Activated CD4-positive, alpha-beta T cell treated with anti-CD3 and anti-CD28 coated beads, Interleukin-2, amount 10 ng/mL, durations not matched to agents 24 days and 14 days (primary cell): ENCODE measurements at regions of chr11 and their contacts with region 1.

Region 1: DNA sequence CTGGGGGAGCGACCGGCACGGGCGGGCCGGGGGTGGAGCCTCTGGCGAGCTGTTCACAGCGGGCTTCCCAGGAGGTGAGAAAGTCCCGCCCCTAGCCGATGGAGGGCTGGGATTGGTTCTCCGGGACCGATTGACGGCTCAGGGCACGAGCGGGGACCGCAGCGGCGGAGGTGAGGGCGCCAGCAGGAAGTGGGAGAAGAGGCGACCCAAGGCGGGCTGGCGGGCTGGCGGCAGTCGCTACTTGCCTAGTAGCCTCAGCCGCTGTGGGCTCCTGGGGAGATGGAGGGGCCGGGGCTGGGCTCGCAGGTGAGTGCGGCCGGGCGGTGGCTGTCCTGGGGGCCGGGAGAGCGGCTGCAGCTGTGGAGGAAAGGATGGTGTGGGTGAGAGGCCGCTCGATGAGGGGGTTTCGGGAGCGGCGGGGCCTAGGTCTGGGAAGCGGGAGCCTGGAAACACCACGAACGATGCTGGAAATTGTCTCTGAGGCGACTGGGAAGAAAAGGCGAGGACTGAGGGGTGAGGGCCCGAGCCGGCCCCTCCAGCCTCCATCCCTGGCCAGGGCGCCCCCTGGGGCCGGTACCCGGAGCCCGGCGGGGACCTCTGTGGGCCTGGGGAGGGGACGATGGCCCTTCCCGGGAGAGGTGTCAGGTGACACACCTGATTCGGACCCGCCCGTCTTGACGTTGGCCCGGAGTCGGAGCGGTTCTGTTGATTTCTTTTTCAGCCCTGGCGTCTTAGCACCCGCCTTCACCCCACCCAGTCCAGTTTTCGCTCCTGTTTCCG is at the start of gene ZDHHC13:
- DNase-seq: peak; percentile 99
- H3K4me3 Mint-ChIP-seq: peak within 1 kb of the TSS; percentile 94
- H3K27ac Mint-ChIP-seq: peak within 1 kb of the TSS; percentile 93
- H3K4me1 Mint-ChIP-seq: peaks cover 43% of the 10 kb centered on the region
- H3K27me3 Mint-ChIP-seq: peaks cover 19% of the 10 kb centered on the region
- total RNA-seq, gene ZDHHC13: 24.8 and 28.1 TPM in 2 replicates

Region 2: GRCh38 chr11:19482319-19483100 is 365.3 kb after region 1 on chr11:
- intact Hi-C with region 1: no loop called
- DNase-seq: no peak
- H3K4me3 Mint-ChIP-seq: no peak overlapping the region
- H3K27ac Mint-ChIP-seq: no peak overlapping the region
- H3K4me1 Mint-ChIP-seq: no peaks in the 10 kb centered on the region
- H3K27me3 Mint-ChIP-seq: no peaks in the 10 kb centered on the region

Region 3: DNA sequence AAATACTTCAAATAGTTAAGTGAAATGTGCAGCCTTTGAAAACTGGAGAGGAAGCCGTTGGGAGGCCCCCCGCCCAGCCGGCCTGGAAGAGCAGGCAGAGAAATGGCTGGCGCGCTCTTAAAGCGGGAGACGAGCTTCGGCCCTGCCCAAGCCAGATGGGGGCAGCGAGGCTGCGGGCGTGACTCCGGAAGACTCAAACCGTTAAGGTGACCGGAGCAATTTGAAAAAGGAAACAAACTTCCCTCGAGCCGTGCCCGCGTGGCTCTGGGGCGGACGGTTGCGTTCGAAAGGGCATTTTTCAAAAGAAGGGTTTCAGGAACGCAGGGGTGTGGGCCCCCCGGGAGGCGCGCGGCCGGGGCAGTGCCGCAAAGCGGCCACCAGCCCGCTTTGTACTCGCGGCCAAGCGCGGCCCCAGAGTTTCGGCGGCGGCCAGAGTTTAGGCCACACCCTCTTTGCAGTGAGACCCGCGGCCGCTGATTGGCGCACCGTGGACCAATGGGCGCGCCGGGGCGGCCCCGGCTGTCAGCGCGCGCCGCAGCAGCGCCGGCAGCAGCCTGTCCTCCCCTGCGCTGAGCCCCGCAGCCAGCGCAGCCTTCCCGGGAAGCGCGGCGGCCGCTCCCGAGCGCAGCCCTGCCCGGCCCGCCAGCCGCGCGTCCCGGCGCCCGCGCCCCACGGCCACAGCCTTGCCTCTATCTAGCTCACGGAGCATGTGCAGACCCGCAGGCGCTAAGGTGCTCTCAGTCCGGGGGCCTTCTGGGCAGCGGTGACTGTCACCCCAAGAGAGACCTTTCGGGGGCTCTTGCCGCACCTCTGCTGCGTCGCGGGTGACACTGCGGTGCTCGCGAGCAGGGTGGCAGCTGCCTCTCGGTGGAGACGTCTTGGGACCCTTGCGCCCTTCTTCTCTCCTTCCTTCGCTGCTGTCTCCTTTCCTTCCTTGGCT is 595.4 kb after region 1 on chr11 and contains the start of gene NAV2:
- intact Hi-C with region 1: loop called (anchors 5 kb)
- DNase-seq: peak; percentile 94
- H3K4me3 Mint-ChIP-seq: peak within 1 kb of the TSS; percentile 88
- H3K27ac Mint-ChIP-seq: peak within 1 kb of the TSS; percentile 83
- H3K4me1 Mint-ChIP-seq: peaks cover 21% of the 10 kb centered on the region
- H3K27me3 Mint-ChIP-seq: peaks cover 64% of the 10 kb centered on the region
- total RNA-seq, gene NAV2: 0.28 TPM in 1 of 2 replicates, not detected in the other